ENCODE measurements at regions of chr15 and their contacts with region 1.

Region 1: GRCh38 chr15:41774062-41774881 is at the start of gene MAPKBP1:
- DNase-seq: peak; percentile 98 to 100
- H3K4me3 ChIP-seq: peak within 1 kb of the TSS; percentile 77 to 90 (median 84)
- H3K27ac ChIP-seq: peak within 1 kb of the TSS; percentile 69 to 91 (median 88)
- H3K4me1 ChIP-seq: peaks cover 39 to 61% (median 57%) of the 10 kb centered on the region in 4 donors
- H3K27me3 ChIP-seq: no peaks in the 10 kb centered on the region
- CTCF ChIP-seq: peak in 5 of 7 experiments; percentile 36 to 66 (median 59)
- EP300 ChIP-seq: no peak
- POLR2A ChIP-seq: no peak
- total RNA-seq, gene MAPKBP1: 8.8 to 41.5 (median 22.6) TPM

Region 2: GRCh38 chr15:41811432-41812195 is 37.3 kb after region 1 on chr15:
- intact Hi-C with region 1: loop called (anchors 5 kb)
- DNase-seq: peak; percentile 89 to 94
- H3K4me3 ChIP-seq: no peak overlapping the region
- H3K27ac ChIP-seq: no peak overlapping the region
- H3K4me1 ChIP-seq: peaks cover 2 to 18% (median 6%) of the 10 kb centered on the region in 4 donors
- H3K27me3 ChIP-seq: no peaks in the 10 kb centered on the region
- CTCF ChIP-seq: peak in 5 of 7 experiments; percentile 70 to 90 (median 88)
- EP300 ChIP-seq: no peak
- POLR2A ChIP-seq: no peak

Region 3: GRCh38 chr15:41928637-41929620 is 154.7 kb after region 1 on chr15:
- intact Hi-C with region 1: no loop called
- DNase-seq: peak; percentile 34 to 63
- H3K4me3 ChIP-seq: no peak overlapping the region
- H3K27ac ChIP-seq: peak overlapping the region; percentile 63 to 74 (median 66)
- H3K4me1 ChIP-seq: peaks cover 54 to 95% (median 76%) of the 10 kb centered on the region in 4 donors
- H3K27me3 ChIP-seq: no peaks in the 10 kb centered on the region
- CTCF ChIP-seq: no peak
- EP300 ChIP-seq: no peak
- POLR2A ChIP-seq: no peak

Measured in stomach (tissue), 19 donors.